Activated CD8-positive, alpha-beta T cell treated with anti-CD3 and anti-CD28 coated beads, Interleukin-2, amount 10 ng/mL, durations not matched to agents 7 days and 5 days (primary cell): ENCODE measurements at regions of chr6 and their contacts with region 1.

Region 1: GRCh38 chr6:63573140-63573898 is 1.0 kb downstream of the LOC128125822 start:
- DNase-seq: peak; percentile 76
- ATAC-seq: peak; percentile 40
- H3K4me3 Mint-ChIP-seq: peak overlapping the region; percentile 96
- H3K27ac Mint-ChIP-seq: peak overlapping the region; percentile 97
- H3K4me1 Mint-ChIP-seq: peaks cover 40% of the 10 kb centered on the region
- H3K27me3 Mint-ChIP-seq: no peaks in the 10 kb centered on the region

Region 2: DNA sequence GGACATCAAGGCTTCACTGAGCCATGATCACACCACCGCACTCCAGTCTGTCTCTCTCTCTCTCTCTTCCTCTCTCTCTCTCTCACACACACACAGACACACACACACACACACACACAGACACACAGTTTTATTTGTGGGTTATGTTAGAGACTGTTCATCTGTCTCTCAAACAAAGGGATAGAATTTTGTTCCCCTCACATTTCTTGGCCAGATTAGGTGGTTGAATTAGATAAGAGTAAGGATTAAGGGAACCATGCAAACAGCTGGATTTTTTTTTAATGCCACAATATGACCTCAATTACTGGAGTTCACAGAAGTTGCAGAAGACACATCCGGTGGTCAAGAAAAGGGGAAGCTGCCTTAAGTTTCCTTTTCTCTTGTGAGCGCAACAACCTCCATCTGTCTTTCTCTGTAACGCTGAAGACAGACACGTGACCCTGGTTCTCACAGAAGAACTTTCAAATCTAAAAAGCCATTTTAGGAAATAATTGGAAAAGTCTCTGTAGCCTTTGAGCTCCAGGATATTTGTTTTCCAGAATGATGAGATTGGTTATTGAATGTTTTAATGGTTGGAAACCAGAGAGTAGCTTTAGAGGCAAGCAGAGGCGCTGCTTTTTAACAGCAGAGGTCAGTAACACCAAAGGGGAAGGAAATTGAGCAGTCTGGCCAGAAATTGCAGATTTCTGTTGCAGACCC is 220.6 kb before region 1 on chr6:
- CTCF ChIA-PET with region 1: interaction called, 18 read pairs
- POLR2A ChIA-PET with region 1: interaction called, 3 read pairs
- DNase-seq: peak; percentile 58
- ATAC-seq: peak; percentile 77
- H3K4me3 Mint-ChIP-seq: peak overlapping the region; percentile 50
- H3K27ac Mint-ChIP-seq: peak overlapping the region; percentile 77
- H3K4me1 Mint-ChIP-seq: peaks cover 24% of the 10 kb centered on the region
- H3K27me3 Mint-ChIP-seq: peaks cover 11% of the 10 kb centered on the region

Region 3: DNA sequence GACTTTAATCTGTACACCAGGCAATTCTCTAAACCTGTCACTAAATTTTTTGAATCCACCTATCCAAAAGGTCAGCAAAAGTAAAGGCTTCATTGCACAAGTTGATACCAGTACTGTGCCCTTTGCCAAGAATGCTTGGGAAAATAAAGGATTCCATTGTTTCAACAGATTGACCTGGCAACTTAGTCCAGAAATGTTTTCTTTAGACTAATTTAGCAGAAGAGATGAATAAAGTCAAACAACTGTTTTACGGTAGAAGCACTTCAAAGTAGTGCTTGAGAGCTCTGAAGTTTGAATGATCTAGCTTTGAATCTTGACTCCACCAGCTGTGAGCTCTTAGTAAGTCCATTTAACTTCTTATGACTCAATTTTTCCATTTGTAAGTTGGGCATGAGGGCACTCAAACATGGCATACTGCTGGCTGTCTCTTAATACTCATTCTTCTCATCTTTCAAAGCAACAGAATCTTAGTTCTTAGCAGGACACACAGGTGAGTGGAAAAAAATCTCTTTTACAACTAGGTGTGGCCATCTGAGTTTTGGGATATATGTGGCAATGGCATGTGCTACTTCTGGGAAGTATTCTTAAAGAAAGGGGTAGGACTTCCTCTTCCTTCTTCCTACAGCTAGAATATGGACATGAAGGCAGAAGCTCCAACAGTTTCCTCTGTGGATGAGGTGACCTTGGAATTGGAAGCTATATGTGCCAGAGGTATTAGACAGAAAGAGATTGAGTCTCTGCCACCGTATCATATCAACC is 57.0 kb before region 1 on chr6:
- CTCF ChIA-PET with region 1: no interaction called
- POLR2A ChIA-PET with region 1: no interaction called
- DNase-seq: no peak
- ATAC-seq: no peak
- H3K4me3 Mint-ChIP-seq: no peak overlapping the region
- H3K27ac Mint-ChIP-seq: no peak overlapping the region
- H3K4me1 Mint-ChIP-seq: peaks cover 5% of the 10 kb centered on the region
- H3K27me3 Mint-ChIP-seq: peaks cover 17% of the 10 kb centered on the region

Region 4: DNA sequence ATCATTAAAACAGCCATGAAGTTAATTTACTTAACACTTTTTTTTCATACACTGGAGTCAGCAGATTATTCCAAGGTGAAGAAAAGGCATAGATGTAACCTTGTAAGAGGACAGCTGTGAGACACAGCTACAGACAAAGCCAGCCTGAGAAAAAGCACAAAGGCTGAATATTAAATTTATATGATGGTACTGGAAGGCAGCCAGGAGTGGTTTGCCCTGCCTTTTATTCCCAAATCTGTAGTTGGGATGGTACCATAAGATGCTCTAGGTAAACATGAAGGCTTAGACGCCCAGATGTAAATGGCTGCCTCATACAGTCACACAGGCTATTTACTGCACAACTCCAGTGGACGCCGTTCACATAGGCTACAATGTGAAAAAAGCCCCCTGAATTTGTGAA is 43.1 kb before region 1 on chr6:
- CTCF ChIA-PET with region 1: interaction called, 17 read pairs
- POLR2A ChIA-PET with region 1: interaction called, 6 read pairs
- DNase-seq: no peak
- ATAC-seq: no peak
- H3K4me3 Mint-ChIP-seq: no peak overlapping the region
- H3K27ac Mint-ChIP-seq: peak overlapping the region; percentile 97
- H3K4me1 Mint-ChIP-seq: peaks cover 37% of the 10 kb centered on the region
- H3K27me3 Mint-ChIP-seq: no peaks in the 10 kb centered on the region

Region 5: DNA sequence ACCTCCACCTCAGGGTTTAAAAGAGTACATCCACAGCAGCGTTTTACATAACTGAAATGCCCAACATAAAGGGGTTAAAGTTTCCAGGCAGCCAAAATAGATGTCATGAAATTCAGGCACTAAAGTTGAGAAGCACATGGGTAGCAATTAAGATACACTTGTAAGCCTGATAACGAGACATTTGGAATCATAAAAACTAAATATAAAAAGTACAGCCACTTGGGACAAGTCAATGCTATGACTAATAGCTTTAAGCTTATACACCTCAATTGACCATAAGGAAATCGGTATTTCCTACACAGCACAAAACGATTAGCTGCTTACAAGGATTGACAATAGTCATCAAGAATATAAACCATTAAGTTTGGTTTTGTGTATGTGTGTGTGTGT is 10.8 kb after region 1 on chr6:
- CTCF ChIA-PET with region 1: interaction called, 12 read pairs
- POLR2A ChIA-PET with region 1: no interaction called
- DNase-seq: no peak
- ATAC-seq: no peak
- H3K4me3 Mint-ChIP-seq: no peak overlapping the region
- H3K27ac Mint-ChIP-seq: no peak overlapping the region
- H3K4me1 Mint-ChIP-seq: peaks cover 4% of the 10 kb centered on the region
- H3K27me3 Mint-ChIP-seq: peaks cover 12% of the 10 kb centered on the region

Region 6: GRCh38 chr6:63635588-63636517 is 62.5 kb after region 1 on chr6 and contains the start of gene PHF3:
- CTCF ChIA-PET with region 1: interaction called, 9 read pairs
- POLR2A ChIA-PET with region 1: interaction called, 21 read pairs
- DNase-seq: peak; percentile 92
- ATAC-seq: peak; percentile 95
- H3K4me3 Mint-ChIP-seq: peak within 1 kb of the TSS; percentile 97
- H3K27ac Mint-ChIP-seq: peak within 1 kb of the TSS; percentile 97
- H3K4me1 Mint-ChIP-seq: peaks cover 38% of the 10 kb centered on the region
- H3K27me3 Mint-ChIP-seq: peaks cover 3% of the 10 kb centered on the region
- total RNA-seq, gene PHF3: 39.3 to 40.2 TPM